PC-9 (cell line): ENCODE measurements at regions of chr2 and their contacts with region 1.

Region 1: DNA sequence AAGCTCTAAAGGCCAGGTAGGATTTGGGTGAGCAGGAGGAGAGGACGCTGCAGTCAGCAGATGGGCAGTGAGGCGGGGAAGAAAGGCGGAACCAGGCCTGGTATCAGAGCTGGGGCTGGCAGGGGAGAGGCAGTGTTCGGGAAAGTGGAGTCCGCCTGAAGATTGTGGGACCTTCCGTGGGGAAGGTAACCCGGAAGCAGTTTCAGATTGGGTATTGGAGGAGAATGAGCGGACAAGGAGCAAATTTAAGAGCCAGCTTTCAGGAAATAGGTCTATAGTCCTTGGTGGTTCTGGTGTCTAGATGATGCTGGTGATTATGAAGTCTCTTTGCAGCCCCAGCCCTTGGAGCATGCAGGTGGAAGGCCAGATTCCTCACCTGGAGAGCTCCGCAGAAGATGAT is 51.0 kb downstream of the TCF7L1 start:
- DNase-seq: no peak
- H3K4me3 ChIP-seq: no peak overlapping the region
- H3K27ac ChIP-seq: no peak overlapping the region
- H3K4me1 ChIP-seq: no peaks in the 10 kb centered on the region; the same call in 1 of the 2 replicates
- H3K27me3 ChIP-seq: no peaks in the 10 kb centered on the region
- CTCF ChIP-seq: no peak

Region 2: DNA sequence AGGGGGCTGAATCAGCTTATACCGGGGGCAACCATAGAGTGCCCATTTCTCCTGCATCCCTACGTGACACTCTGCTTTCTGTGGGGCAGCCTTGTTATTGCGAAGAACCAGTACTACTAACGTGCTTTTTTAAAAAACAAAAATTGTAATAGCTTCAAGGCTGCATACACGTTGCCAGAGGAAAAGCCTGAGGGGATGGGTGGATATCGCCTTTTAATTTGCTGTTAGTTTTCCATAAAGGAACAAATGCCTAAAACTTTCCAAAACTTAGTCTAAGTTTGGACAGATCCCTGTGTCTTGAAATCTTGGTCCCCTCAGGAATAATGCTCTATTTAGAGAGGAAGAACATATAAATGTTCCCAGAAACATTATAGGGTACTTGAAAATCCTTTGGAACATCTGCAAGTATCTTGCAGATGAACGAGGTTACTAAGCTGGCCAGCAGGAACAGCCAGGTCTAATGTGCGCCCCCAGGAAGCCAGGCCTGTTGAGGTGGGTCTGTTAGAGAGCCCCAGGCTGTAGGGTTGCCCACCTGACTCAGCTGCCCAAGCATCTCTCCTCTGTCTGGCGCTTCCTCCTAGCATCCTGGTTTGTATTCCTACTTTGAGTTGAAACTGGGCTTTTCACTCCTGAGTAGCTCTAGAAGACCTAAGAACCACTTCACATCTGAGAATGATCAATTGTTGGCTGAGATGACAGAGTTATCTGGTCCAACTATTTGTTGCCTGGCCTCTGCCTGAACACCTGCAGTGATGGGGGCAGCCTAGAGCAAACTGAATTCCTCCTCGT is 46.6 kb after region 1 on chr2:
- CTCF ChIA-PET with region 1: interaction called, 10 read pairs
- POLR2A ChIA-PET with region 1: no interaction called
- intact Hi-C with region 1: no loop called
- DNase-seq: no peak
- H3K4me3 ChIP-seq: no peak overlapping the region
- H3K27ac ChIP-seq: no peak overlapping the region
- H3K4me1 ChIP-seq: no peaks in the 10 kb centered on the region
- H3K27me3 ChIP-seq: no peaks in the 10 kb centered on the region
- CTCF ChIP-seq: no peak; the same call in 1 of the 2 replicates

Region 3: DNA sequence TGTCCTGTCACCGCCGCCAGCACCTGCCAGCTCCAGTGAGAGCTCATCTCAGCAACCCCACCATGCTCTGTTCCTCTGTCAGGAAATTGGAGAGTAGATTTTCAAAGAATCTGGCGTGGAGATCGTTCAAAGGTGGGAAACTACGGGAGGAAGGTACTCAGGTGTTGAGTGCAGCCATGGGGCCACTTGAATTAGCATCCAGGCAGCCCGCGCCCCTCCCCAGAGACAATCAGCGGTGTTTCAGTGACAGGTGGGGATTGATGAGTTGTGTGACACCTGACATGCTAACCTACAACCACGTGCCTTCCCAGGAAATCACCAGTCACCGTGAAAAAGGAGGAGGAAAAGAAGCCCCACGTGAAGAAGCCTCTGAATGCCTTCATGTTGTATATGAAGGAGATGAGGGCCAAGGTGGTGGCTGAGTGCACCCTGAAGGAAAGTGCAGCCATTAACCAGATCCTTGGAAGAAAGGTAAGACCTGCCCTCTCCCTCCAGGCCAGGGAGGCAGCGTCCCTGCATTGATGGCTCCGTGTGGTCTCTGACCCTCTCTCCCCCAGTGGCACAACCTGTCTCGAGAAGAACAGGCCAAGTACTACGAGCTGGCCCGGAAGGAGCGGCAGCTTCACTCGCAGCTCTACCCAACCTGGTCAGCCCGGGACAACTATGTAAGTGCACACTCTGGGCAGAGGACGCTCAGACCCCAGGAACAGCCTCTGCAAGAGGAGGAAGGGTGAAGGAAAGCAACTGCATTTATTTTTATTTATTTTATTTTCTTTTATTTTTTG is 121.9 kb after region 1 on chr2:
- CTCF ChIA-PET with region 1: no interaction called
- POLR2A ChIA-PET with region 1: no interaction called
- intact Hi-C with region 1: no loop called
- DNase-seq: no peak
- H3K4me3 ChIP-seq: no peak overlapping the region
- H3K27ac ChIP-seq: no peak overlapping the region
- H3K4me1 ChIP-seq: no peaks in the 10 kb centered on the region
- H3K27me3 ChIP-seq: no peaks in the 10 kb centered on the region
- CTCF ChIP-seq: no peak